CD4-positive, alpha-beta memory T cell (primary cell): ENCODE measurements at regions of chr2 and their contacts with region 1.

Region 1: GRCh38 chr2:231227309-231228162 is 29.1 kb downstream of the ARMC9 start:
- DNase-seq: peak; percentile 44 to 58 (median 50)
- H3K4me3 ChIP-seq: no peak overlapping the region
- H3K4me3 Mint-ChIP-seq: no peak overlapping the region
- H3K27ac ChIP-seq: no peak overlapping the region
- H3K27ac Mint-ChIP-seq: no peak overlapping the region
- H3K4me1 ChIP-seq: no peaks in the 10 kb centered on the region
- H3K4me1 Mint-ChIP-seq: no peaks in the 10 kb centered on the region
- H3K27me3 ChIP-seq: no peaks in the 10 kb centered on the region
- H3K27me3 Mint-ChIP-seq: no peaks in the 10 kb centered on the region

Region 2: GRCh38 chr2:231411831-231412617 is 184.5 kb after region 1 on chr2:
- CTCF ChIA-PET with region 1: interaction called, 12 read pairs
- POLR2A ChIA-PET with region 1: no interaction called
- intact Hi-C with region 1: no loop called
- DNase-seq: peak in 4 of 5 donors; percentile 10 to 33 (median 22)
- H3K4me3 ChIP-seq: no peak overlapping the region
- H3K4me3 Mint-ChIP-seq: peak overlapping the region in 7 of 8 donors; percentile 29 to 79 (median 67)
- H3K27ac ChIP-seq: no peak overlapping the region
- H3K27ac Mint-ChIP-seq: no peak overlapping the region
- H3K4me1 ChIP-seq: peaks cover 12% of the 10 kb centered on the region
- H3K4me1 Mint-ChIP-seq: peaks cover 1 to 11% (median 5%) of the 10 kb centered on the region in 4 donors
- H3K27me3 ChIP-seq: peaks cover 14% of the 10 kb centered on the region
- H3K27me3 Mint-ChIP-seq: peaks cover 29 to 37% of the 10 kb centered on the region in 2 donors

Region 3: GRCh38 chr2:231503766-231504165 is 276.2 kb after region 1 on chr2:
- CTCF ChIA-PET with region 1: no interaction called
- POLR2A ChIA-PET with region 1: no interaction called
- intact Hi-C with region 1: no loop called
- DNase-seq: no peak
- H3K4me3 ChIP-seq: no peak overlapping the region
- H3K4me3 Mint-ChIP-seq: no peak overlapping the region
- H3K27ac ChIP-seq: no peak overlapping the region
- H3K27ac Mint-ChIP-seq: no peak overlapping the region
- H3K4me1 ChIP-seq: no peaks in the 10 kb centered on the region
- H3K4me1 Mint-ChIP-seq: no peaks in the 10 kb centered on the region
- H3K27me3 ChIP-seq: no peaks in the 10 kb centered on the region
- H3K27me3 Mint-ChIP-seq: no peaks in the 10 kb centered on the region

Region 4: DNA sequence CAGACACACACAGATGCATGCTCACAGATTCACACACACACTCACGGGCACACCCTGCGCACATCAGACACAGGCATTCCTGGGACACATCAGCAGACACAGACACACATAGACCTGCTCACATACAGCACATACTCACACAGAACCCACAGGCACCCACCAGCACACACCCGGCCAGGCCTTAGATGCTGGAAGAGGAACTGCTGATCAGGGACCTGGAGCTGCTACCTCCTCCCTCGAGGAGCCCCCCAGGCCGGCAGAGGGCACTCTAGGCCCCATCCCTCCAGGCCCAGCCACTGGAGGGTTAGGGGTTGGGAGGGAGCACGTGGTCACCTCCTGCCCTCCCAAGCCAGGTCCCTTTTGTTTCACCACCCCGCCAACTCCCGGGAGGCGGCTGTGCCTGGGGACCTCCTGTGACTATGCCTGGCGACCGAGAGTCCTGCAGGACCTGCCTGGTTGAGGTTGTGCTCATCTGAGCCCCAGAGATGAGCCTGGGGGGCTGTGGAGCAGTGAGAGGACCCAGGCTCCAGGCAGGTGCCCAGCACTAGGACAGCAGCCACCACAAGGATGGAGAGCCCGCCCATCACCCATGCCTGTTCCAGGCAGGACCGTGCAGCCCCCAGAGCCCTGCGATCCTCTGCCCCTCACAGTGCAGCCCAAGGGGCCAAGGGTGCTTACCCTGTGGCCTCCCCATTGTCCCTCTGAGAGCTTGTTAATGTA is 459.8 kb after region 1 on chr2:
- CTCF ChIA-PET with region 1: no interaction called
- POLR2A ChIA-PET with region 1: no interaction called
- intact Hi-C with region 1: no loop called
- DNase-seq: peak in 4 of 5 donors; percentile 50 to 62 (median 55)
- H3K4me3 ChIP-seq: no peak overlapping the region
- H3K4me3 Mint-ChIP-seq: peak overlapping the region in 1 of 8 donors; percentile 29
- H3K27ac ChIP-seq: no peak overlapping the region
- H3K27ac Mint-ChIP-seq: peak overlapping the region in 5 of 7 donors; percentile 0 to 57 (median 36)
- H3K4me1 ChIP-seq: no peaks in the 10 kb centered on the region
- H3K4me1 Mint-ChIP-seq: peaks cover 0 to 6% (median 3%) of the 10 kb centered on the region in 4 donors
- H3K27me3 ChIP-seq: peaks cover 3% of the 10 kb centered on the region
- H3K27me3 Mint-ChIP-seq: peaks cover 3 to 5% of the 10 kb centered on the region in 2 donors